CD14-positive monocyte (primary cell): ENCODE measurements at regions of chr3 and their contacts with region 1.

Region 1: DNA sequence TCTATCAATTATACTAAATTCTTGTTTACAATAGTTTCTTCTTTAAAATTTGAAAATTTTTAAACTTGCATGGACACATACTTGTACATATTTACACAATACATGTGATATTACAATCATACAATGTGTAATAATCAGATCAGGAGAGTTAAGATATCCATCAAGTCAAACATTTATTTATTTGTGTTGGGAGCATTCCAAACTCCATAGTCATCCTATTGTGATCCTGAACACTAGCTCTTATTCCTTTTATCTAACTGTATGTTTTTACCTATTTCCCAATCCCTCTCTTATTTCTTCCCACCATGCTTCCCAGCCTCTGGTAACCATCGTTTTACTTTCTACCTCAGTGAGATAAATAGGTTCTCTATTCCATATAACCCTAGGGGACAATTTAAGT is 1219.2 kb downstream of the ZPLD1 start:
- DNase-seq: no peak
- H3K4me3 ChIP-seq: no peak overlapping the region
- H3K4me3 Mint-ChIP-seq: no peak overlapping the region
- H3K27ac ChIP-seq: no peak overlapping the region
- H3K27ac Mint-ChIP-seq: no peak overlapping the region
- H3K4me1 ChIP-seq: no peaks in the 10 kb centered on the region
- H3K4me1 Mint-ChIP-seq: no peaks in the 10 kb centered on the region
- H3K27me3 ChIP-seq: no peaks in the 10 kb centered on the region
- H3K27me3 Mint-ChIP-seq: peaks cover 0 to 3% (median 0%) of the 10 kb centered on the region in 3 donors
- CTCF ChIP-seq: no peak

Region 2: GRCh38 chr3:103629391-103629790 is 24.6 kb before region 1 on chr3:
- intact Hi-C with region 1: loop called in 1 of 2 experiments (anchors 2 kb)
- DNase-seq: no peak
- H3K4me3 ChIP-seq: no peak overlapping the region
- H3K4me3 Mint-ChIP-seq: no peak overlapping the region
- H3K27ac ChIP-seq: no peak overlapping the region
- H3K27ac Mint-ChIP-seq: no peak overlapping the region
- H3K4me1 ChIP-seq: no peaks in the 10 kb centered on the region
- H3K4me1 Mint-ChIP-seq: no peaks in the 10 kb centered on the region
- H3K27me3 ChIP-seq: no peaks in the 10 kb centered on the region
- H3K27me3 Mint-ChIP-seq: no peaks in the 10 kb centered on the region
- CTCF ChIP-seq: no peak

Region 3: DNA sequence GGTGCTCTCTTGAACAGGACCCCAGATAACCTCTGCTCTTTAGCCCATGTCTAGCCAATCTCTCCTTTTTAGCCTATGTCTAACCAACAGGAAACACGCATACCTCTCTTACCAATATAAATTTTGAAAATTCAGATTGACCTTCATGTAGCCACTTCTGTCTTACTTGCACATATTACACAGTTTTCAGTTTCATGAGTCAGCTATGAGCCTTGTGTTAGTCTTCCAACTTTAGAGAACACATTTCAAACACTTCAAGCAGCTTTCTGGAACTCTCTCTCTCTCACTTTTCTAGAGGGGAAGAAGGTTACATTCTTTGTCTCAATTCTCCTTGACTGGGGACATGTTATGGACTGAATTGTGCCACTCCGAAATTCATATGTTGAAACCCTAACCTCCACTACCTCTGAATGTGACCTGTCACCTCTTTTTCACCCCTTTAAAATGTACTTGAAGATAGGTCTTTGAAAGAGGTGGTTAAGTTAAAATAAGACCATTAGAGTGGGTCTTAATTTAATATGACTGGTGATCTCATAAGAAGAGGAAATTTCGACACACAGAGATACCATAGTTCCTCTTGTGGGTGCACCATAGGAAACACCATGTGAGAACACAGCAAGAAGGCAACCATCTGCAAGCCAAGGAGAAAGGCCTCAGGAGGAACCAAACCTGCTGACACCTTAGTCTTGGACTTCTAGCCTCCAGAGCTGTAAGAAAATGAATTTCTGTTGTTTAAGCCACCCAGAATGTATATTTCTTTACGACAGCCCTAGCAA is 1232.4 kb after region 1 on chr3:
- intact Hi-C with region 1: no loop called
- DNase-seq: no peak
- H3K4me3 ChIP-seq: no peak overlapping the region
- H3K4me3 Mint-ChIP-seq: no peak overlapping the region
- H3K27ac ChIP-seq: no peak overlapping the region
- H3K27ac Mint-ChIP-seq: peak overlapping the region in 2 of 7 donors; percentile 38 to 73
- H3K4me1 ChIP-seq: no peaks in the 10 kb centered on the region
- H3K4me1 Mint-ChIP-seq: peaks cover 2% of the 10 kb centered on the region
- H3K27me3 ChIP-seq: no peaks in the 10 kb centered on the region
- H3K27me3 Mint-ChIP-seq: no peaks in the 10 kb centered on the region
- CTCF ChIP-seq: no peak